Activated CD4-positive, alpha-beta T cell treated with anti-CD3 and anti-CD28 coated beads for 36 hours (primary cell): ENCODE measurements at regions of chr2 and their contacts with region 1.

Region 1: GRCh38 chr2:113138428-113139322 is 11.3 kb downstream of the IL1RN start:
- DNase-seq: peak; percentile 56
- ATAC-seq: peak; percentile 82
- H3K4me3 Mint-ChIP-seq: no peak overlapping the region
- H3K27ac Mint-ChIP-seq: peak overlapping the region; percentile 71
- H3K4me1 Mint-ChIP-seq: peaks cover 24% of the 10 kb centered on the region
- H3K27me3 Mint-ChIP-seq: no peaks in the 10 kb centered on the region

Region 2: GRCh38 chr2:113080134-113080533 is 58.5 kb before region 1 on chr2:
- CTCF ChIA-PET with region 1: interaction called, 148 read pairs
- POLR2A ChIA-PET with region 1: no interaction called
- intact Hi-C with region 1: loop called (anchors 1 kb)
- DNase-seq: peak; percentile 73
- ATAC-seq: peak; percentile 73
- H3K4me3 Mint-ChIP-seq: no peak overlapping the region
- H3K27ac Mint-ChIP-seq: no peak overlapping the region
- H3K4me1 Mint-ChIP-seq: peaks cover 15% of the 10 kb centered on the region
- H3K27me3 Mint-ChIP-seq: no peaks in the 10 kb centered on the region

Region 3: GRCh38 chr2:113124181-113124961 is 14.3 kb before region 1 on chr2:
- CTCF ChIA-PET with region 1: interaction called, 39 read pairs
- POLR2A ChIA-PET with region 1: no interaction called
- intact Hi-C with region 1: no loop called
- DNase-seq: peak; percentile 25
- ATAC-seq: peak; percentile 71
- H3K4me3 Mint-ChIP-seq: no peak overlapping the region
- H3K27ac Mint-ChIP-seq: no peak overlapping the region
- H3K4me1 Mint-ChIP-seq: peaks cover 20% of the 10 kb centered on the region
- H3K27me3 Mint-ChIP-seq: peaks cover 8% of the 10 kb centered on the region

Region 4: DNA sequence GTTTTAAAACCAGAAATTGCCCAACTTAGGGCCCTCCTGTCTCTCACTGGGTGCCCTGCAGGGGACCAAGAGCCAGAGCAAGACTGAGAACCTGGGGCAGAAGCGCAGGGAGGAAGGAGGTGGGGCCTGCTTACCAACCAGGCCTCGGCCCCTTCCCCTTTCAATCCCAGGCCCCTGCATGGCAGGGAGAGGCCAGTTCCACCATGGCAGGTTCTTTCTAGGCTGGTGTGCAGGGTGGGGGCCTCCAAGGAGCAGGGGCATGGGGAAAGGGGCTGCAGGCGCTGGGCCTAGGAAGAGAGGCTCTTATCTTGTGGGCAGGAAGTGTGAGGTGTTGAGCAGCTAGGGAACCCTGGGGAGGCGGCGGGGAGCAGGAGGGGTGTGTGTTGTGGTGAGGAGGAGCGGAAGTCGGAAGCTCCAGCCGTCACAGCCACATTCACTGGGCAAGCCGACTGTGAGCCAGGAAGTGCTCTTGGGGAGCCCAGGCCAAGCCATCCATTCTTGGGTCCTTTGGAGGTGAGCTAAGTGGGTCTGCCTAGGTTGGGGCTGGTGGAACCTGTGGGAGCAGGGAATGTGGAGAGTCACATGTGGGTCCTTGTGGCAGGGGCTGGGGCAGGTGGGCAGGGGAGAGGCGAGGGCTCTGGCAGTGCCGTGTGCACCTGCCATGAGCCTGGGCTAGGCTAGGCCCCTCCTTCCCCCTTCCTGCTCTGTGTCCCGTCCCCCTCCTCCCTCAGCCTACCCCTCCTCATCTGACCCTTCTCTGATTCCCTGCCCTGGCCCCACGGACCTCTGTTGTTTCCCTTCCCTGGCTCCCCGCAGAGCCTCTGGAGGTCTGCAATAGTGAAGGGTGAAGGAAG is 35.1 kb after region 1 on chr2 and contains the start of gene PSD4:
- CTCF ChIA-PET with region 1: interaction called, 95 read pairs
- POLR2A ChIA-PET with region 1: no interaction called
- intact Hi-C with region 1: loop called in 1 of 2 experiments (anchors 1 kb)
- DNase-seq: peak; percentile 95
- ATAC-seq: peak; percentile 81
- H3K4me3 Mint-ChIP-seq: peak within 1 kb of the TSS; percentile 91
- H3K27ac Mint-ChIP-seq: peak within 1 kb of the TSS; percentile 99
- H3K4me1 Mint-ChIP-seq: peaks cover 73% of the 10 kb centered on the region
- H3K27me3 Mint-ChIP-seq: no peaks in the 10 kb centered on the region
- total RNA-seq, gene PSD4: 232 to 274 TPM

Region 5: DNA sequence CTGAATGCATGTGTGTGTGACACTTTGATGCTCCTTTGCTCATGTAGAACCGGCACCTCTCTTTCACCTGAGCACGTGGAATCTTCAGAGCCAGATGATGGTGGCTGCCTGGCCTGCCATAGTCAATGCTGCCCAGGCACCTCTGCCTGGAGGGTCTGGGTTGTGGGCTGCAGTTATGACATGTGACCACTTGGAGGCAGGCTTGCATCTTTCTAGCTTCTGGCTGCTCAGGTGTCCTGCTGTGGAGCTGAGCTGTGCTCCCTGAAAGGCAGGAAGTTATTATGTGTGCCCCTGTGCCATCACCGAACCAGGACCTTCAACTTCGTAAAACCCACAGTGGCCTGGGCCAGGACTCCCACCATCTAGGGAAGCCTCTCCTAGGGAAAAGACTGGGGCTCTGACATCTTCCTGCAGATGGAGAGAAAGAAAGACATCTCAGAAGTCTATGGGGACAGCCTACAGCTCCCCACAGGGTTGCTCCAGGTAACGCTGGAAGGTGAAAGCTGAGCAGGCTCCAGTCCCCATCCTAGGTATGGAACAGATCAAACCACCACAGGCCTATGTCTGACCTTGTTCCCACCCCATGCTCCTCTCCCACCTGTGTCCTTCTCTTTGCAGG is 65.3 kb after region 1 on chr2:
- CTCF ChIA-PET with region 1: interaction called, 62 read pairs
- POLR2A ChIA-PET with region 1: interaction called, 5 read pairs
- intact Hi-C with region 1: loop called (anchors 1 kb)
- DNase-seq: peak; percentile 85
- ATAC-seq: peak; percentile 83
- H3K4me3 Mint-ChIP-seq: no peak overlapping the region
- H3K27ac Mint-ChIP-seq: peak overlapping the region; percentile 63
- H3K4me1 Mint-ChIP-seq: peaks cover 18% of the 10 kb centered on the region
- H3K27me3 Mint-ChIP-seq: no peaks in the 10 kb centered on the region

Region 6: DNA sequence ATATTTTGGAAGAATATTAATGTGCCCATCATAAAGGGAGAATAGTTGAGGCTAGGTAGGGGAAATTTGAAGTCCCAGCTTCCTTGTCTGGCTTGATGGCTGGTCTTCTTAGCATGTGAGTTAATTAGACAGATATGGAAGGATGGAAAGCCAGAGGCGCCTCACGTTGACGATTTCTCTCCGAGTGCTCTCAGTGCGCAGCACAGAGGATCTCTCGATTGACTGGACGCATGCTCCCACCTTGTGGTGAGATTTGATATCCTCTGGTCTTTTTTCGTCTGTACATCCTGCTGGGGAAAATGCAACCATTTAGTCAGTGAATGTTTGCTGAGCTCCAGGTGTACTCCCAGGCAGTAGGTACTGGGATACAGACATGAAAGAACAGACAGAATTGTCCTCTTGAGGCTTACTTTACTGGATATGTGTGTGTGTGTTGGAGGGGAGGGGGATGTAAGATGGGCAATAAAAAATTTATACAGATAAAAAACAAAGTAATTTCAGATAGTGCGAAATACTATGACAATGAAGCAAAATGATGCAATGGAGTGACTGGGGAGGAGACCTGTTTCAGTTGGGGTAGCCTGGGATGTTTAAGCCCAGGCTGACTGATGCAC is 231.9 kb after region 1 on chr2:
- CTCF ChIA-PET with region 1: interaction called, 10 read pairs
- POLR2A ChIA-PET with region 1: no interaction called
- intact Hi-C with region 1: loop called (anchors 1 to 5 kb)
- DNase-seq: peak; percentile 78
- ATAC-seq: peak; percentile 98
- H3K4me3 Mint-ChIP-seq: no peak overlapping the region
- H3K27ac Mint-ChIP-seq: no peak overlapping the region
- H3K4me1 Mint-ChIP-seq: peaks cover 7% of the 10 kb centered on the region
- H3K27me3 Mint-ChIP-seq: peaks cover 2% of the 10 kb centered on the region

Region 7: DNA sequence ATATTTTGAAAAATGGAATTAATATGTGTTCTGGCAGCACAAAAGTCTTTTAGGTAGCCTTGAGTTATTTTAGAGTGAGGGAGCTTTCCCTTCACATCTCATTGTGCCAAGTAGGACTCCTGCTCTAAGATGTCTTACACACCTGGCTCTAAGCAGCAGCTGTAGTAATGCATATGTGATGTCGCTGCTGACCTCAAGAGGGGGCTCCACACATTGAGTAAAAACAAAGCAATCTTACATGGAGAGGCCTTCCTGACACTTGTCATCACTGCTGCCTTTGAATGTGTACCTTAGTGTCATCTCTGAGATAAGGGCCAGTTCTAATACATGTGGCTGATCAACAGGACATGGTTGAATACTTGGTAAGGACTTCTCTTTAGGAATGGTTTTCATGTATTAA is 827.0 kb after region 1 on chr2:
- CTCF ChIA-PET with region 1: no interaction called
- POLR2A ChIA-PET with region 1: no interaction called
- intact Hi-C with region 1: no loop called
- DNase-seq: peak; percentile 53
- ATAC-seq: peak; percentile 83
- H3K4me3 Mint-ChIP-seq: no peak overlapping the region
- H3K27ac Mint-ChIP-seq: no peak overlapping the region
- H3K4me1 Mint-ChIP-seq: peaks cover 19% of the 10 kb centered on the region
- H3K27me3 Mint-ChIP-seq: no peaks in the 10 kb centered on the region